ENCODE measurements at regions of chr2 and their contacts with region 1.

Region 1: GRCh38 chr2:197445746-197446145 is 7.6 kb upstream of the COQ10B start:
- DNase-seq: no peak
- H3K4me3 ChIP-seq: no peak overlapping the region
- H3K27ac ChIP-seq: no peak overlapping the region
- H3K4me1 ChIP-seq: no peaks in the 10 kb centered on the region
- H3K27me3 ChIP-seq: no peaks in the 10 kb centered on the region
- CTCF ChIP-seq: no peak

Region 2: DNA sequence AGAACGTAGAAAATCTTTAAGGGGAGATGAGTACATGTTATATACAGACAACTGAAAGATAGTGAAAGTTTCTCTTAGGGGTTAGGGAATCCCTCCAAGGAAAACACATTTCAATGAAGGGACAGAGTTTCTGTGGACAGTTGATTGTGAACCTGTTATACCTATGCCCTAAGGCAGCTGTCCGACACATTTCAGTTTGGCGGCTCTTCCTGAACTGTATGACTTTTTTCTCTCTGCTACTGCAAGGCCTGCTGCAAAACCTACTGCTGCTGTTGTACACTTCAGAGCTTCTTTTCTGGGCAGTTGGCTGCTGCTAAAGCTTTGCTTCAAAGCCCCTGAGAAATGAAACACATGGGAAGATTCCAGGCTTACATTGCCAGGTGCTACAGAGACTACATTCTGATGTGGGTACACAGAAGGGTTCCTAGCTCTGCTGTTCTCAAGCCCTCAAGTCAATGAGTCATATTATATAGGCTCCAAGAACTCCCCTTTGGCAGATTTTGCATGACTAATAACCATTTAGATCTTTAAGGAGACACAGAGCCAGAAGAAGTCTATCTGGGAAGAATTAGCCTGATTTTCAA is 506.5 kb before region 1 on chr2:
- CTCF ChIA-PET with region 1: no interaction called
- POLR2A ChIA-PET with region 1: no interaction called
- intact Hi-C with region 1: no loop called
- DNase-seq: peak in 1 of 2 experiments; percentile 60
- H3K4me3 ChIP-seq: no peak overlapping the region
- H3K27ac ChIP-seq: no peak overlapping the region
- H3K4me1 ChIP-seq: no peaks in the 10 kb centered on the region
- H3K27me3 ChIP-seq: no peaks in the 10 kb centered on the region
- CTCF ChIP-seq: no peak

Region 3: DNA sequence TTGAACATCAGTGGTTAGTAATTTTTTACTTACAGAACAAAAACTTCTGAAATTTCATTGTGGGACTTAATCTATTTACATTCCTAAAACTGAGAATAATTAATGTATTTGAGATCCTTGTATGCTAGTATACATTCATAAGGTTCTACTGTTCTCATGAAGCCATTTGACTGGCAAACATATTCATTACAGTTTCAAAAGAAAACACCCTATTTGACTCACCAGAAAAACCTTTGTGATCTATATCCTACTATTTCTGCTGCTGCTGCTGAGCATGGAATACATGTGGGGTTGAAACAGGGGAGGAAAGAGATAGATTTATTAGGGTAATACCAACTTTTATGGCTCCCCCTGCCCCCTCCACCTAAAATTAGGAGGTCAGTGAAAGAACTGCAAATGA is 281.3 kb after region 1 on chr2:
- CTCF ChIA-PET with region 1: interaction called, 15 read pairs
- POLR2A ChIA-PET with region 1: no interaction called
- intact Hi-C with region 1: no loop called
- DNase-seq: no peak
- H3K4me3 ChIP-seq: no peak overlapping the region
- H3K27ac ChIP-seq: no peak overlapping the region
- H3K4me1 ChIP-seq: no peaks in the 10 kb centered on the region
- H3K27me3 ChIP-seq: no peaks in the 10 kb centered on the region
- CTCF ChIP-seq: no peak